ENCODE measurements at regions of chr9 and their contacts with region 1.

Region 1: DNA sequence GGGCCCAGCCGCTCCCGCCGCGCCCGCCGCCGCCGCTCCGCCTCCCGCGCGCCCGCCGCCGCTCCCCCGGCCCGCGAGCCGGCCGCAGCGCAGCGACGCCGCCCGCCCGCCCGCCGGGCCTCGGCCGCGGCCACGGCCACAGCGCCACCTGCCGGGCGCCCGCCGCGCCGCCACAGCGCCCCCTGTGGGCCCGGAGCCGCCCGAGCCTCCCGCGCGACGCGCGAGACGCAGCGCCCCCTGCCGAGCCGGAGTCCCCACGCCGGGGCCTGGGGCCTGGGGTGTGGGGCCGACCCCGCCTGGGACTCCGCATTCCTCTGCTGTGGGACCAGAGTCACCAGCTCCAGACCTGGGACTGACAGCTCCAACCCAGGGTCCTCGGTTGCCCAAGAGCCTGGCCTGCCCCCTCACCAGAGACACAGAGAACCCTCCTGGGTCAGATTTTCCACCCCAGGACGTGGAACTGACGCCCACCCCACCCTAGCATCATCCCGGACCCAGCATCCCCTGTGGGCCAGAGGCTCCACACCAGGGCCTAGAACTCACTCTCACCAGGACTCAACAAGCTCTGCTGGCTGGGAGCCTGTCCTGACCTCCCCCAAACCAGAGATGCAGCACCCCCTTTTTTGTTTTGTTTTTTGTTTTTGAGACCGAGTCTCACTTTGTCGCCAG is at the start of gene RAPGEF1:
- DNase-seq: peak in 1 of 2 donors; percentile 59
- ATAC-seq: peak; percentile 46 to 62
- H3K4me3 ChIP-seq: peak within 1 kb of the TSS; percentile 54 to 92 (median 64)
- H3K27ac ChIP-seq: peak within 1 kb of the TSS; percentile 78 to 90 (median 86)
- H3K4me1 ChIP-seq: peaks cover 43 to 46% of the 10 kb centered on the region in 2 donors
- H3K27me3 ChIP-seq: no peaks in the 10 kb centered on the region
- CTCF ChIP-seq: peak; percentile 76 to 99 (median 98)
- POLR2A ChIP-seq: no peak
- total RNA-seq, gene RAPGEF1: 123 to 296 (median 217) TPM

Region 2: DNA sequence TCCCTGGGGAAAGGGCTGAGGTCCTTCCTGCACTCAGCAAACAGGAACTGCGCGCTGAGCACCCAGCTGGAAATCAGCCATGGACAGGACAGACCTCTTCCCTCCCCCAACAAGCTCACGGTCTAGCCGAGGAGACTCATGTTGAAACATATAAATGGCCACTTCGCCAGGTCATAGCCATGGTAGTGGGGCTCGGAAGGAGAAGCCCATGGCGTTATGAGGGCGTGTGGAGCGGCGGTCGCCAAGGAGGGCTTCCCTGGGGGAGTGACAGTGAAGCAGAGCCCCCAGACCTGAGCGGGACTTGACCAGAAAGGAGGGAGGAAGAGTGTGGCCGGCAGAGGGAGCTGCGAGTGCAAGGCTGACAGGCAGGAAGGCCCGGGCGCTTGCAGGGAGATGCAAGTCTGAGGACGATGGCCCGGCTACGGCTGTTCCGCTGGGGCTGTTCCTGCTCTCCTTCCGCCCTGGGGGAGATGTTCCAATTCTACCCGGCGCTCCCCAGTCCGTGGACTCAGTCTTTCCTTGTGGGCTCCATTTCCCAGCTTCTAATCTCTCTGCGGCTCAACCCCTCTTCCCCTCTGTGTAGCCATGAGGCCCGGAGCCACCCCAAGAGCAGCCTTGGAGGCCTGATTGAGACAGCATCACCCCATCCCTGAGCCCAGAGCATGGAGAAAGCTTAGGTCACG is 390.1 kb before region 1 on chr9:
- in situ Hi-C with region 1: loop called (anchors 10 to 25 kb)
- intact Hi-C with region 1: no loop called
- DNase-seq: peak; percentile 75 to 79
- ATAC-seq: peak; percentile 81 to 83
- H3K4me3 ChIP-seq: peak overlapping the region in 3 of 4 donors; percentile 29 to 61 (median 51)
- H3K27ac ChIP-seq: peak overlapping the region in 2 of 4 donors; percentile 34 to 47
- H3K4me1 ChIP-seq: peaks cover 8 to 12% of the 10 kb centered on the region in 2 donors
- H3K27me3 ChIP-seq: no peaks in the 10 kb centered on the region
- CTCF ChIP-seq: peak; percentile 80 to 92 (median 90)
- POLR2A ChIP-seq: no peak

Region 3: DNA sequence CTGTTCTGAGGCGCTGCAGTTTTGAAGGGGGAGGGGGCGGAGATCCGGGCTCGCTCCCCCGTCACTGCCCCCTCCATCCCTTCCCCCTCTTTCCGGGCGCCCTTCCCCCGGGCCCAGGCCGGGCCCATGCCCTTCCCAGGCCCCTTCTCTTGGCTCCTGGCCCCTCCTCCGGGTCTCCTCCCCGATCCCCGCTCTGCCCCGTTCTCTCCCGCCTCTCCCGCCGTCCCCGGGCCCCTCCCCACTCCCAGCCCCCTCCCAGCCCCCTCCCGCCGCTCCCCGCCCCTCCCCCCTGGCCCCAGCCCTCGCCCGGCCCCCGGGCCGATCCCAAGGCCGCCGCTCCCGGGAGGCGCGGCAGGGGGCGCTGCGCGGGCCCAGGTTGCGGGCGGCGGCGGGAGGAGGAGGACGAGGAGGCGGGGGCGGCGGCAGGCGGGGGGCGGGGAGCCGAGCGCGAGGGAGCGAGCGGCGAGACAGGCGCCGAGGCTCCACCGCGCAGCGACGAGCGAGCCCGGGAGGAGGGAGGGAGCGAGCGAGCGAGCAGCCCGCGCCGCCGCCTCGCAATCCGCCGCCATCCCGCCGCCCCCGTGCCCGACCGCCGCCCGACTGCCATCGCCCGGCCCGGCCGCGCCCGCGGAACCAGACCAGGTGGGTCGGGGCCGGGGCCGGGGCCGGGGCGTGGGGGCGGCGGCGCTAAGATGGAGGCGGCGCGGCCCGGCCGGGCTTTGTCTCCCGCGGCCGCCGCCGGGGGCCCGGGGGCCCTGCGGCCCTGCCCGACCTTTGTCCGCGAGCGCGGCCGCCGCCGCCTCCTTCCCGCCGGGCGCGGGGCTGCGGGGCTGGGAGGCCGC is 346.3 kb before region 1 on chr9 and contains the start of gene PRRC2B:
- in situ Hi-C with region 1: no loop called
- intact Hi-C with region 1: loop called (anchors 10 kb)
- DNase-seq: peak; percentile 77 to 79
- ATAC-seq: peak; percentile 70 to 80
- H3K4me3 ChIP-seq: peak within 1 kb of the TSS; percentile 56 to 65 (median 60)
- H3K27ac ChIP-seq: peak within 1 kb of the TSS; percentile 93 to 96 (median 94)
- H3K4me1 ChIP-seq: peaks cover 40% of the 10 kb centered on the region in 2 donors
- H3K27me3 ChIP-seq: no peaks in the 10 kb centered on the region
- CTCF ChIP-seq: peak in 3 of 5 experiments; percentile 38 to 96 (median 47)
- POLR2A ChIP-seq: peak; percentile 78
- total RNA-seq, gene PRRC2B: 29.9 to 41.6 (median 37.2) TPM

Region 4: DNA sequence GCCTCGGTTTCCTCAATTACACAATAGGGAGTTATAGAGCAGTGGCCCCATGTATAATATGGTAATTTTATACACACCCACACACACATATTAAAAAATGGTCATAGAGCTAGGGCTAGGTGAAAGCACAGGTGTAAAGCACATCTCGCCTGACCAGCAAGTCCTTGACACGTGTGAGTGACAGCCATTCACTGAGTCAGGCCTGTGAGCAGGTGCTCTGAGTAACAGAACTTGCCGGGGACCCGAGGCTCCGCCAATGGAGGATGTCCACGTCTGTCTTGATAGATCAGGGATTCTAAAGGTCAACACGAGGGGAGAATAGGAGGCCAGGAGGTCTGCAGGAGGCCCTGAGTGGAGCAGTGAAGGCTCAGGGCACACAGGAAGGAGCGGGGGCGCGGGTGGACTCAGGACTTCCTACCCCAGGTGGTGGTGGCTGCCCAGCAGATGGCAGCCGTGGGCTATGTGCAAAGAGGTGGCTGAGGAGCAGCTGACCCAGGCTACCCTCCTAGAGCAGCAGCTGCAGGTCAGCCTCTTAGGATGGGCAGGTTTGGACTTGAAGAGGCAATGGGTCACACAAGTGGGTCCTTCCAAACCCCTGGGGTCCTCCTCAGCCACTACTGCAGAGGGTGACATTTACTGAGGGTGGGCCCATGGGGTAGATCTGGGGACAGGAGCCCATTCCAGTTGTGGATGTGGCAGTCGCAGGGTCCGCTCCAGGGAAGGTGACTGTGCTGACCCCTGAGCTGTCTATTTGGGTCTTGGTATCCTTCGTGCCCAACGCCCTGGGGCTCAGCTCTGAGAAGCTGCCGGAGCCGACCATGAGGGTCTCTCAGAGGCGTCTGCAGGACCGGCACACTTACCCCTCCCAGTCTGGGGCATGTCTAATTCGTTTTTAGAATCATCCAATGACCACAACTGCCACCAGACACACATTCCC is 148.9 kb before region 1 on chr9:
- in situ Hi-C with region 1: loop called (anchors 5 kb)
- intact Hi-C with region 1: loop called (anchors 1 kb)
- DNase-seq: peak; percentile 55 to 83
- ATAC-seq: peak; percentile 70 to 77
- H3K4me3 ChIP-seq: no peak overlapping the region
- H3K27ac ChIP-seq: peak overlapping the region; percentile 18 to 73 (median 62)
- H3K4me1 ChIP-seq: peaks cover 0 to 8% of the 10 kb centered on the region in 2 donors
- H3K27me3 ChIP-seq: no peaks in the 10 kb centered on the region
- CTCF ChIP-seq: peak; percentile 94 to 98 (median 96)
- POLR2A ChIP-seq: no peak

Region 5: DNA sequence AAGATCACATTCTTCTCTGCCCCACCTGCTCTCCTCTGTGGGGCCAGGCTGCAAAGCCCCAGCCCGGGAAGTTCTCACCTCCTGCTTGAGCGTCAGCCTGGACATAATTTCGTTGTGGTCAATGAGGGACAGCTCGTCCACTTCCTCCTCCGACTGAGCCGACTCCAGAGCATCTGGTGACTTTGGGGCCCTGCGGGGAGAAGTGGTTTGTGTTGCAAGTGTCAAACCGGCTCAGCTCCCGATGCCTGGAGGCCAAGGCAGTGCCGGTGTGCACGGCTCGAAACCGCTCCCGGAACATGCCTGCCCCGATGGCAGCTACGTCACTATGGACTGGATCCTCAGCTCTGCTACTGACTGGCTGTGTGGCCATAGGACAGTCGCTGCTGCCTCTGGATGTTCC is 142.0 kb before region 1 on chr9:
- in situ Hi-C with region 1: loop called (anchors 5 kb)
- intact Hi-C with region 1: no loop called
- DNase-seq: peak in 1 of 2 donors; percentile 24
- ATAC-seq: no peak
- H3K4me3 ChIP-seq: no peak overlapping the region
- H3K27ac ChIP-seq: no peak overlapping the region
- H3K4me1 ChIP-seq: peaks cover 0 to 8% of the 10 kb centered on the region in 2 donors
- H3K27me3 ChIP-seq: no peaks in the 10 kb centered on the region
- CTCF ChIP-seq: no peak
- POLR2A ChIP-seq: no peak

Region 6: GRCh38 chr9:131627648-131628458 is 112.3 kb before region 1 on chr9:
- in situ Hi-C with region 1: no loop called
- intact Hi-C with region 1: loop called (anchors 1 kb)
- DNase-seq: peak; percentile 89 to 96
- ATAC-seq: peak; percentile 85 to 90
- H3K4me3 ChIP-seq: no peak overlapping the region
- H3K27ac ChIP-seq: peak overlapping the region; percentile 88 to 93 (median 90)
- H3K4me1 ChIP-seq: peaks cover 47 to 50% of the 10 kb centered on the region in 2 donors
- H3K27me3 ChIP-seq: no peaks in the 10 kb centered on the region
- CTCF ChIP-seq: no peak
- POLR2A ChIP-seq: peak; percentile 54 to 69

Region 7: DNA sequence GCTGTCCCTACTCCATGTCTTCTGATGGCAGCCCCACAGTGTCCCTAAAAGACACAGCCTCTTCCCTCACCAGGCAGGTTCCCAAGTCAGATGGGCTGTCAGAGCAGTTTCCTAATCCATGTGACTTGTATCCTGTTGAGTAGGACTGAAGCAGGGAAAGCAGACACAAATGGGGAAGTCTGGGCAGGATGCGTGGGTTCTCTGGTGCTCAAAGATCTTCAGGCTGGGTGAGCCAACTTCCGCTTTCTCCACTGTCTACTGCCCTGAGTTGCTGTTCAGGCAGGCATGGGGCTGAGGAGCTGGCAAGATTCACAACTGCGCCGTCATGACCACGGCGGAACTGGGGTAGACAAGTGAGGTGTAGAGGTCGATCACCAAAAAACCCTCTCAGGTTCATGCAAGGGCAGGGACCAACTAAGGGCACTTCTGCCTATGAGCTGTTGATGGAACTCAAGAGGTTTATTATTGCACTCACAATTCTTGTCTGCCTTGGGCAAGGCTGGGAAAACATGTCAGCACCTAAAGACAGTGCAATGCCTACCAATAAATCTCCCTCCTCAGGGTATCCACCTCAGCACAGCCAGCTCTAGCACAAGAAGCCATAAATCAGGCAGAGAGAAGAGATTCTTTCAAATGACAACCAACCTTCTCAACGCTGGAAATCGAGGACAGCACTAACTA is 83.6 kb before region 1 on chr9:
- in situ Hi-C with region 1: loop called in 3 of 4 experiments (anchors 10 kb)
- intact Hi-C with region 1: no loop called
- DNase-seq: peak; percentile 54 to 81
- ATAC-seq: peak; percentile 57 to 64
- H3K4me3 ChIP-seq: no peak overlapping the region
- H3K27ac ChIP-seq: peak overlapping the region; percentile 68 to 87 (median 80)
- H3K4me1 ChIP-seq: peaks cover 76 to 87% of the 10 kb centered on the region in 2 donors
- H3K27me3 ChIP-seq: no peaks in the 10 kb centered on the region
- CTCF ChIP-seq: no peak
- POLR2A ChIP-seq: peak in 1 of 2 donors; percentile 4

Region 8: DNA sequence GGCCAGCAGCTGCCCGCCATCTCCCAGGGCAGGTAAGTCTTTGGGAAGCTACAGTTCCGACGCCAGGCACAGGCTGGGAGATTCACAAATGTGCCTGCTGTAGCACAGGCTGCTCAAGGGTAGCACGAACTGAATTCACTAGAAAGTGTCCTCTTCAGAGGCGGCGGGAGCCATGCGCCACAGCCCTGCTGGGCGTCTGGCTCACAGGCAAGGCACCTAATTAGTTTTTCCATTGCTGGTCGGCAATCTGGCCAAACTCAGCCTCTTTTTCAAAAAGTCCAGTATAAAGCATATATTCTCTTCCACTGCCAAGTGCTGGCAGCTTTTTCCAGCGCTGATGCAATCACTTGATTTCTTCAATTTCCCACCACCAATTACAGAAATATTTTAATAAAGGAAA is 128.7 kb after region 1 on chr9:
- in situ Hi-C with region 1: no loop called
- intact Hi-C with region 1: no loop called
- DNase-seq: no peak
- ATAC-seq: no peak
- H3K4me3 ChIP-seq: no peak overlapping the region
- H3K27ac ChIP-seq: no peak overlapping the region
- H3K4me1 ChIP-seq: no peaks in the 10 kb centered on the region
- H3K27me3 ChIP-seq: no peaks in the 10 kb centered on the region
- CTCF ChIP-seq: no peak
- POLR2A ChIP-seq: no peak

Region 9: GRCh38 chr9:132059361-132059760 is 319.2 kb after region 1 on chr9:
- in situ Hi-C with region 1: no loop called
- intact Hi-C with region 1: no loop called
- DNase-seq: no peak
- ATAC-seq: peak; percentile 30 to 45
- H3K4me3 ChIP-seq: no peak overlapping the region
- H3K27ac ChIP-seq: no peak overlapping the region
- H3K4me1 ChIP-seq: peaks cover 18 to 27% of the 10 kb centered on the region in 2 donors
- H3K27me3 ChIP-seq: no peaks in the 10 kb centered on the region
- CTCF ChIP-seq: no peak
- POLR2A ChIP-seq: no peak

Measured in gastrocnemius medialis (tissue), 4 donors.